CD8-positive, alpha-beta T cell (primary cell): ENCODE measurements at regions of chr2 and their contacts with region 1.

Region 1: GRCh38 chr2:37648331-37649011 is 23.0 kb downstream of the CDC42EP3 start:
- DNase-seq: peak in 8 of 9 experiments; percentile 8 to 80 (median 57)
- ATAC-seq: peak; percentile 71
- H3K4me3 ChIP-seq: peak overlapping the region in 1 of 2 experiments; percentile 24
- H3K4me3 Mint-ChIP-seq: peak overlapping the region; percentile 65
- H3K27ac ChIP-seq: peak overlapping the region in 1 of 2 experiments; percentile 68
- H3K27ac Mint-ChIP-seq: peak overlapping the region; percentile 92
- H3K4me1 ChIP-seq: peaks cover 84% of the 10 kb centered on the region
- H3K4me1 Mint-ChIP-seq: peaks cover 92% of the 10 kb centered on the region
- H3K27me3 ChIP-seq: no peaks in the 10 kb centered on the region
- H3K27me3 Mint-ChIP-seq: no peaks in the 10 kb centered on the region
- CTCF ChIP-seq: peak; percentile 24

Region 2: GRCh38 chr2:37549598-37549997 is 98.9 kb before region 1 on chr2:
- CTCF ChIA-PET with region 1: no interaction called
- POLR2A ChIA-PET with region 1: no interaction called
- intact Hi-C with region 1: loop called in 1 of 2 experiments (anchors 5 kb)
- DNase-seq: no peak
- ATAC-seq: no peak
- H3K4me3 ChIP-seq: no peak overlapping the region
- H3K4me3 Mint-ChIP-seq: no peak overlapping the region
- H3K27ac ChIP-seq: no peak overlapping the region
- H3K27ac Mint-ChIP-seq: no peak overlapping the region
- H3K4me1 ChIP-seq: no peaks in the 10 kb centered on the region
- H3K4me1 Mint-ChIP-seq: peaks cover 16% of the 10 kb centered on the region
- H3K27me3 ChIP-seq: no peaks in the 10 kb centered on the region
- H3K27me3 Mint-ChIP-seq: no peaks in the 10 kb centered on the region
- CTCF ChIP-seq: no peak

Region 3: GRCh38 chr2:37600735-37601134 is 47.7 kb before region 1 on chr2:
- CTCF ChIA-PET with region 1: interaction called, 17 read pairs
- POLR2A ChIA-PET with region 1: interaction called, 18 read pairs
- intact Hi-C with region 1: no loop called
- DNase-seq: peak in 1 of 9 experiments; percentile 46
- ATAC-seq: no peak
- H3K4me3 ChIP-seq: peak overlapping the region; percentile 42 to 66
- H3K4me3 Mint-ChIP-seq: peak overlapping the region; percentile 90
- H3K27ac ChIP-seq: peak overlapping the region; percentile 65 to 84
- H3K27ac Mint-ChIP-seq: peak overlapping the region; percentile 99
- H3K4me1 ChIP-seq: peaks cover 44% of the 10 kb centered on the region
- H3K4me1 Mint-ChIP-seq: peaks cover 54% of the 10 kb centered on the region
- H3K27me3 ChIP-seq: no peaks in the 10 kb centered on the region
- H3K27me3 Mint-ChIP-seq: no peaks in the 10 kb centered on the region
- CTCF ChIP-seq: no peak

Region 4: DNA sequence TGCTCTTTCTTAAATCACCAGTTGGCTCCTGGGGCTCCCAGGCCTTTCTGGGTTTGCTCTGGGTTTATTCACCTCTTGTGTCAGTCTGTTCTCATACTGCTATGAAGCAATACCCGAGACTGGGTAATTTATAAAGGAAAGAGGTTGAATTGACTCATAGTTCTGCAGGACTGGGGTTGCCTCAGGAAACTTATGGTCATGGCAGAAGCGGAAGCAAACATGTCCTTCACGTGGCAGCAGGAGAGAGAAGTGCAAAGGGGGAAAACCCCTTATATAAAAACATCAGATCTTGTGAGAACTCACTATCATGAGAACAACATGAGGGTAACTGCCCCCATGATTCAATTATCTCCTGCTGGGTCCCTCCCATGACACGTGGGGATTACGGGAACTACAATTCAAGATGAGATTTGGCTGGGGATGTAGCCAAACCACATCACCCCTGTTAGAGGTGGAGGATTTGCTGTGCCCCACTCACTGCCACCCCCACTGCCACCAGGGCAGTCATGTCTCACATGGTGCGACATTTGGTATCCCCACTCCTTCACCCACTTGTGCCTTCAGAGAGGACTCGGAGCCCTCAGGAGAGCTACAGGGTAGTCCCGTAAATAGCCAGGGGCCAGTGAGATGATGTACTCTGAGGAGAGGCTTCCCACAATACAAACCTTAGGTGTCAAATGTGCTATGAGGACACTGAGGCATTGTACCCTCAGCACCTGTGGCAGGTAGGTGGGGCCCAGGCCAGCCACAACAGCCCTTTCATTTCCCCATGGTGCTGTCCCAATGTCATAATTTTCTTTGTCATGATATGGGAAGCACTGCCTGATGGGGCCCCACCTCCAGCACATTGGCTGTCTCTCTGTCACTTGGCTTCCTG is 12.7 kb before region 1 on chr2:
- CTCF ChIA-PET with region 1: interaction called, 7 read pairs
- POLR2A ChIA-PET with region 1: interaction called, 4 read pairs
- intact Hi-C with region 1: loop called in 1 of 2 experiments (anchors 1 kb)
- DNase-seq: peak; percentile 29 to 94 (median 68)
- ATAC-seq: peak; percentile 82
- H3K4me3 ChIP-seq: peak overlapping the region in 1 of 2 experiments; percentile 21
- H3K4me3 Mint-ChIP-seq: peak overlapping the region; percentile 32
- H3K27ac ChIP-seq: peak overlapping the region; percentile 50 to 92
- H3K27ac Mint-ChIP-seq: peak overlapping the region; percentile 92
- H3K4me1 ChIP-seq: peaks cover 41% of the 10 kb centered on the region
- H3K4me1 Mint-ChIP-seq: peaks cover 80% of the 10 kb centered on the region
- H3K27me3 ChIP-seq: no peaks in the 10 kb centered on the region
- H3K27me3 Mint-ChIP-seq: no peaks in the 10 kb centered on the region
- CTCF ChIP-seq: no peak

Region 5: GRCh38 chr2:37659723-37660122 is 11.3 kb after region 1 on chr2:
- CTCF ChIA-PET with region 1: interaction called, 13 read pairs
- POLR2A ChIA-PET with region 1: interaction called, 4 read pairs
- intact Hi-C with region 1: loop called in 1 of 2 experiments (anchors 2 kb)
- DNase-seq: no peak
- ATAC-seq: no peak
- H3K4me3 ChIP-seq: no peak overlapping the region
- H3K4me3 Mint-ChIP-seq: no peak overlapping the region
- H3K27ac ChIP-seq: peak overlapping the region in 1 of 2 experiments; percentile 44
- H3K27ac Mint-ChIP-seq: peak overlapping the region; percentile 95
- H3K4me1 ChIP-seq: peaks cover 65% of the 10 kb centered on the region
- H3K4me1 Mint-ChIP-seq: peaks cover 93% of the 10 kb centered on the region
- H3K27me3 ChIP-seq: no peaks in the 10 kb centered on the region
- H3K27me3 Mint-ChIP-seq: no peaks in the 10 kb centered on the region
- CTCF ChIP-seq: no peak